ENCODE measurements at regions of chr22 and their contacts with region 1.

Region 1: GRCh38 chr22:22587577-22588188 is 28.6 kb upstream of the PRAME start:
- DNase-seq: no peak
- ATAC-seq: no peak
- H3K4me3 ChIP-seq: no peak overlapping the region
- H3K4me3 Mint-ChIP-seq: no peak overlapping the region
- H3K27ac ChIP-seq: peak overlapping the region in 1 of 2 donors; percentile 23
- H3K27ac Mint-ChIP-seq: no peak overlapping the region
- H3K4me1 ChIP-seq: peaks cover 36 to 38% of the 10 kb centered on the region in 2 donors
- H3K4me1 Mint-ChIP-seq: peaks cover 33% of the 10 kb centered on the region
- H3K27me3 ChIP-seq: no peaks in the 10 kb centered on the region
- H3K27me3 Mint-ChIP-seq: no peaks in the 10 kb centered on the region
- CTCF ChIP-seq: no peak

Region 2: DNA sequence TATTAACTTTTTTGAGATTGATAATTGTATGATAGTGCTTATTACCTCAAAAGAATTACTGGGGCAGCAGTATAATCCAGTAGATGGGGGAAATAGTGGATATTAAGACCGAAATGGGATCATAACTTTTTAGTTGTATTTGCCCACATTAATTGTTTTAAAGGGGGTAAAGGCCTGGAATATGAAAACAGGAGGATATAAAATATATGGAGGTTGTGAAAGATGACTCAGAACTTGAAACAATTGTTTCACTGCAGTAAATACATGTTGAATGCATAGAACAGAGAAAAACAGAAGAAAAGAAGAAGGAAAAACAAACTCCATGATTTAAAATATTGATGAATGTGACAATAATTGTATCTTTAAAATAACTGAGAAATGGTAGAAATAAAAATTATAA is 437.2 kb before region 1 on chr22:
- CTCF ChIA-PET with region 1: no interaction called
- POLR2A ChIA-PET with region 1: no interaction called
- intact Hi-C with region 1: no loop called
- DNase-seq: no peak
- ATAC-seq: no peak
- H3K4me3 ChIP-seq: no peak overlapping the region
- H3K4me3 Mint-ChIP-seq: no peak overlapping the region
- H3K27ac ChIP-seq: no peak overlapping the region
- H3K27ac Mint-ChIP-seq: no peak overlapping the region
- H3K4me1 ChIP-seq: peaks cover 4 to 10% of the 10 kb centered on the region in 2 donors
- H3K4me1 Mint-ChIP-seq: peaks cover 8% of the 10 kb centered on the region
- H3K27me3 ChIP-seq: no peaks in the 10 kb centered on the region
- H3K27me3 Mint-ChIP-seq: no peaks in the 10 kb centered on the region
- CTCF ChIP-seq: no peak

Region 3: DNA sequence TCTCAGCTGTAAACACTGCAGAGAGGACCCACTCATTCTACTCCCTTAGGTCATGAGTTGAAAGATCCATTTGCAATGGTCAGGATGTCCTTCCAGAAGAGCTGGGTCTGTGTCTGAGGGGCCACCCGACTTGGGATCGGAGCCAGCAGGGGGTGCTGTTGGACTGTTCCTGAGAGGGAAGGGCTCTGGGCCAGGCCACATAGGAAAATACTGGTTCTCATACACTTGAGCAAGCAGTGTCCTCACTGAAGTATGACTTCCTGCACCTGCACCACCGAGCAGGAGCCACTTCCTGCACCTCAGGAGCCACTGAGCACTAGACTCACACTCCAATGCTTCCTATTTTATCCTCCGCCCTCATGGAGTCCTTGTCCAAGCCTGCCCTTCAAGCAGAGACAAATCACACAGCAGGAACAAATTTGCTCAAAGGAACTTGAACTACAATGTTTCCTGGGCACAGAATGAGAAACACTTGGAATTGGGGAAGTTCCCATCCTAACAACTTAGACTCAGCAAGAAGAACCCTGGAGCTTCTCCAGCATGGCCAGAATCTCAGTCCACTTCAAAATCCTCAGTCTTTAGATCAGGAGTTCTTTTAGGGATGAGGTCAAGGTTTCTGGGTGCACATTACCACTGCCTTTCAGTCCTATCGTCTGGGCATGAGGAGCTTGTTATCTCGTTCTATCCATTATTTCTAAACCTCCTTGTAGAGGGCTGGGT is 379.7 kb before region 1 on chr22:
- CTCF ChIA-PET with region 1: interaction called, 5 read pairs
- POLR2A ChIA-PET with region 1: no interaction called
- intact Hi-C with region 1: loop called (anchors 10 kb)
- DNase-seq: peak; percentile 90
- ATAC-seq: peak; percentile 85
- H3K4me3 ChIP-seq: peak overlapping the region in 1 of 5 experiments; percentile 12
- H3K4me3 Mint-ChIP-seq: peak overlapping the region; percentile 67
- H3K27ac ChIP-seq: peak overlapping the region; percentile 45 to 51
- H3K27ac Mint-ChIP-seq: peak overlapping the region; percentile 93
- H3K4me1 ChIP-seq: peaks cover 53 to 57% of the 10 kb centered on the region in 2 donors
- H3K4me1 Mint-ChIP-seq: peaks cover 54% of the 10 kb centered on the region
- H3K27me3 ChIP-seq: no peaks in the 10 kb centered on the region
- H3K27me3 Mint-ChIP-seq: no peaks in the 10 kb centered on the region
- CTCF ChIP-seq: peak; percentile 89

Region 4: DNA sequence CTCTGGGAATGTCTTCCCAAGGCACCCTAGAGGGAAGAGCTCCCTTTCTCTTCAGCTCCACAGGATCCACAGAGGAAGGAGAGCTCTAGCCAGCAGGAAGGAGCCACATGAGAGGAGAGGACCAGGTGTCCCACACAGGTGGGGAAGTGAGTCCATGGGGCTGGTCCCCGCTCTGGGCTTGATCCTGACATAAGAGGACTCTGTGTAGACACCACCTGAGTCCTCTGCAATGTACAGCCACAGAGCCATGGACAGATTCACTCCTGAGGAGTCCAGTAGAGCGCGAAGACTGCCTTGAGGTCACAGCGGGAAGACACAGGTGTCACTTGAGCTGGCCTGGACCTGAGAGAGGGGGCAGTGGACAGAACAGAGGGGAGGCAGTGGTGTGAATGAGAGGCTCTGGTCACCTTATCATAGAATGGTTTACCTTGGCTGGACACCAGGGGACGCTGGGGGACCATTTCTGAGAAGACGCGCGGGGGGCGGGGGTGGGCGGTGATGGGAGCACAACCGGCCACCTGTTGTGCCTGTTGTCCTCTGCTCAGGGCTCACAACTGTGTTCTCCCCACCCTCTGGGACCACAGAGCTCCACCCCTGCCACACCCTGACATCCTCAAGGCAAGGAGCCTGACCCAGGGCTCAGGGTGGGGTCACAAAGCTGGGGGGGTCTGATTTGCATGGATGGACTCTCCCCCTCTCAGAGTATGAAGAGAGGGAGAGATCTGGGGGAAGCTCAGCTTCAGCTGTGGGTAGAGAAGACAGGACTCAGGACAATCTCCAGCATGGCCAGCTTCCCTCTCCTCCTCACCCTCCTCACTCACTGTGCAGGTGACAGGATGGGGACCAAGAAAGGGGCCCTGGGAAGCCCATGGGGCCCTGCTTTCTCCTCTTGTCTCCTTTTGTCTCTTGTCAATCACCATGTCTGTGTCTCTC is 207.3 kb before region 1 on chr22:
- CTCF ChIA-PET with region 1: interaction called, 16 read pairs
- POLR2A ChIA-PET with region 1: no interaction called
- intact Hi-C with region 1: no loop called
- DNase-seq: peak; percentile 87
- ATAC-seq: peak; percentile 88
- H3K4me3 ChIP-seq: peak overlapping the region in 1 of 5 experiments; percentile 15
- H3K4me3 Mint-ChIP-seq: peak overlapping the region; percentile 77
- H3K27ac ChIP-seq: peak overlapping the region; percentile 60 to 72
- H3K27ac Mint-ChIP-seq: peak overlapping the region; percentile 94
- H3K4me1 ChIP-seq: peaks cover 59 to 69% of the 10 kb centered on the region in 2 donors
- H3K4me1 Mint-ChIP-seq: peaks cover 79% of the 10 kb centered on the region
- H3K27me3 ChIP-seq: no peaks in the 10 kb centered on the region
- H3K27me3 Mint-ChIP-seq: no peaks in the 10 kb centered on the region
- CTCF ChIP-seq: peak; percentile 66

Region 5: DNA sequence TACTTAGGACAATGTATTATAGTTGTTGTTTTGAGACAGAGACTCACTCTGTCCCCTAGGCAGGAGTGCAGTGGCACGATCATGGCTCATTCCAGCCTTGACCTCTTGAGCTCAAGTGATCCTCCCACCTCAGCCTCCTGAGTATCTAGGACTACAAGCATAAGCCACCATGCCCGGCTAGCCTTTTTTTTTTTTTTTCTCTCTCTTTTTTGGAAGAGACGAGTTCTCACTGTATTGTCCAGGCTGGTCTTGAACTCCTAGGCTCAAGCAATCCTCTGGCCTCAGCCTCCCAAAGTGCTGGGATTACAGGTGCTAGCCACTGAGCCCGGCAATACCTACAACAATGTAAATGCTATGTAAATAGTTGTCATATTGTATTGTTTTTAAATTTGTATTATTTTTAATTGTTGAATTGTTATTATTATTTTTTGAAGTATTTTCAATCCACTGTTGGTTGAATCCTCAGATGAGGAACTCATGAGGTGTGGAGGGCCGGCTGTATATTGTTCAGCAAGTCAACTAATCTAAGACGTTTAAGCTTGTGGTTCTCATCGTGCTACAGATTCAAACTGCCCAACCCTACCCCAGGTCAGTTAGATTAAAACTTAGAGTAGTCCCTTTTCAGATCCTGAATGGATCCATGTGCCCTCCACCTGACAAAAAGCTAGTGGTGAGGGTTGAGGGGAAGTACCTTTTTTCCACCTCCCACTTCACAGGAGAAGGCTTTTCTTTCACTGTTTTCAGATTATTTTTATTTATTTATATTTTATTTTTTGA is 55.7 kb before region 1 on chr22:
- CTCF ChIA-PET with region 1: no interaction called
- POLR2A ChIA-PET with region 1: no interaction called
- intact Hi-C with region 1: no loop called
- DNase-seq: no peak
- ATAC-seq: no peak
- H3K4me3 ChIP-seq: no peak overlapping the region
- H3K4me3 Mint-ChIP-seq: no peak overlapping the region
- H3K27ac ChIP-seq: no peak overlapping the region
- H3K27ac Mint-ChIP-seq: no peak overlapping the region
- H3K4me1 ChIP-seq: no peaks in the 10 kb centered on the region
- H3K4me1 Mint-ChIP-seq: no peaks in the 10 kb centered on the region
- H3K27me3 ChIP-seq: no peaks in the 10 kb centered on the region
- H3K27me3 Mint-ChIP-seq: no peaks in the 10 kb centered on the region
- CTCF ChIP-seq: no peak

Region 6: GRCh38 chr22:22546490-22546889 is 41.2 kb before region 1 on chr22:
- CTCF ChIA-PET with region 1: no interaction called
- POLR2A ChIA-PET with region 1: no interaction called
- intact Hi-C with region 1: loop called (anchors 5 kb)
- DNase-seq: no peak
- ATAC-seq: no peak
- H3K4me3 ChIP-seq: no peak overlapping the region
- H3K4me3 Mint-ChIP-seq: no peak overlapping the region
- H3K27ac ChIP-seq: no peak overlapping the region
- H3K27ac Mint-ChIP-seq: no peak overlapping the region
- H3K4me1 ChIP-seq: peaks cover 0 to 12% of the 10 kb centered on the region in 2 donors
- H3K4me1 Mint-ChIP-seq: peaks cover 10% of the 10 kb centered on the region
- H3K27me3 ChIP-seq: no peaks in the 10 kb centered on the region
- H3K27me3 Mint-ChIP-seq: peaks cover 6% of the 10 kb centered on the region
- CTCF ChIP-seq: no peak

Region 7: GRCh38 chr22:22737590-22737989 is 149.9 kb after region 1 on chr22:
- CTCF ChIA-PET with region 1: no interaction called
- POLR2A ChIA-PET with region 1: no interaction called
- intact Hi-C with region 1: no loop called
- DNase-seq: no peak
- ATAC-seq: no peak
- H3K4me3 ChIP-seq: no peak overlapping the region
- H3K4me3 Mint-ChIP-seq: no peak overlapping the region
- H3K27ac ChIP-seq: no peak overlapping the region
- H3K27ac Mint-ChIP-seq: no peak overlapping the region
- H3K4me1 ChIP-seq: no peaks in the 10 kb centered on the region
- H3K4me1 Mint-ChIP-seq: peaks cover under 1% of the 10 kb centered on the region
- H3K27me3 ChIP-seq: peaks cover 0 to 6% (median 2%) of the 10 kb centered on the region in 4 experiments
- H3K27me3 Mint-ChIP-seq: peaks cover 30% of the 10 kb centered on the region
- CTCF ChIP-seq: no peak

Region 8: GRCh38 chr22:23128269-23129108 is 540.8 kb after region 1 on chr22:
- CTCF ChIA-PET with region 1: no interaction called
- POLR2A ChIA-PET with region 1: no interaction called
- intact Hi-C with region 1: loop called (anchors 1 kb)
- DNase-seq: peak; percentile 84
- ATAC-seq: peak; percentile 94
- H3K4me3 ChIP-seq: no peak overlapping the region
- H3K4me3 Mint-ChIP-seq: no peak overlapping the region
- H3K27ac ChIP-seq: no peak overlapping the region
- H3K27ac Mint-ChIP-seq: peak overlapping the region; percentile 18
- H3K4me1 ChIP-seq: no peaks in the 10 kb centered on the region
- H3K4me1 Mint-ChIP-seq: peaks cover 4% of the 10 kb centered on the region
- H3K27me3 ChIP-seq: no peaks in the 10 kb centered on the region
- H3K27me3 Mint-ChIP-seq: no peaks in the 10 kb centered on the region
- CTCF ChIP-seq: peak; percentile 90

Measured in B cell (primary cell).